ENCODE measurements at regions of chr2 and their contacts with region 1.

Region 1: DNA sequence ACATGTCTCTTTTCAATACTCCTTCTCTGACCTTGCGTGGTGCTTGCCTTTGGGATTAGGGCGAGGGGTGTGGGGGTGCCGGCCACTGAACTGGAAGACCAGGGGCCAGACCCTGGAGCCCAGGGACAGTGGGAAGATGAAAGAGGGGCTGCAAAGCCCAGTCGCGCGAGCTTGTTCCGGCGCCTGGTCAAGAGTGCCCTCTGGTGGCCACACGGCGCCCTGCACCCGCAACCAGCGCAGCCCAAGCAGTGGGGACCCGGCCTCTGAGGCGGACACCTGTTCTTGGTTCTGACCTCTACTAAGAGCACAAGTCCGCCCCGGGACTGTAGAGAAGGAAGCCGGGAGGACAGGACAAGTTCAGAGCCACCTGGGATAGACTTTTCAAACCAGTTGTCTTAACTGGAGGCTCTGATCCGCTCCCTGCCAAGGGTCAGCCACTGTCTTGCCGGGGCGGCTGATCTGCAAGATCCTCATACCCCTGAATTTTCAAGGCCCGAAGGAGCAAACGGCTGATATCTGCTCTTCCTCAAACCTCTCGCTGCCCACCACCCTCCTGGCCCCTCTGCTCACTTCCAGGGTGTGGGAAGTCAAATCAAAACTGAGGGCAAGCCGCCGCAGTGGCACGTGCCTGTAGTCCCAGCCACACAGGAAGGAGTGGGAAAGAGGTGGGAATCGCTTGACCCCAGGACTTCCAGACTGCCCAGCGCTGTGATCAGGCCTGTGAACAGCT is 14.9 kb upstream of the MSH6 start:
- DNase-seq: peak; percentile 26 to 91 (median 77)

Region 2: GRCh38 chr2:47437287-47437686 is 330.8 kb before region 1 on chr2:
- intact Hi-C with region 1: loop called (anchors 5 kb)
- DNase-seq: peak in 9 of 42 donors; percentile 13 to 65 (median 33)

Region 3: GRCh38 chr2:47520825-47521665 is 247.0 kb before region 1 on chr2:
- intact Hi-C with region 1: loop called (anchors 10 kb)
- DNase-seq: peak; percentile 49 to 90 (median 75)

Region 4: DNA sequence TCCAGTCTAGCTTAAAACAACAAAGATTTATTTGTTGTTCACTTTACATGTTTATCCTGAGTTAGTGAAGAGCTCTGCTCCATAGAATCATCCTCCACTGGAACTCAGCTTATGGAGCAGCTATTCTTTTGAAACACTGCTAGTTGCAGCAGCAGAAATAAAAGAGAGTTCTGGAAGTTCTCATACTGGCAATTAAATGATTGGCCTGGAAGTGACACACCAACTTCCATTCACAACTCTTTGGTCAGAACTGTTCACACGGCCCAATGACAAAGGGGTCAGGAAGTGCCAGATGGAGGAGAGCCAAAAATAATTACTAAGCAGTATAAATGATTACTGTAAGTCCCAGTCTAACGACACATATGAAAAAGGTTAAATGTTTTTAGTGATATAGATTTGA is 99.2 kb after region 1 on chr2:
- intact Hi-C with region 1: no loop called
- DNase-seq: peak in 6 of 42 donors; percentile 8 to 65 (median 24)

Measured in head of caudate nucleus (tissue), 42 donors.